Cardiac septum (tissue), 1 donor: ENCODE measurements at regions of chr3 and their contacts with region 1.

Region 1: DNA sequence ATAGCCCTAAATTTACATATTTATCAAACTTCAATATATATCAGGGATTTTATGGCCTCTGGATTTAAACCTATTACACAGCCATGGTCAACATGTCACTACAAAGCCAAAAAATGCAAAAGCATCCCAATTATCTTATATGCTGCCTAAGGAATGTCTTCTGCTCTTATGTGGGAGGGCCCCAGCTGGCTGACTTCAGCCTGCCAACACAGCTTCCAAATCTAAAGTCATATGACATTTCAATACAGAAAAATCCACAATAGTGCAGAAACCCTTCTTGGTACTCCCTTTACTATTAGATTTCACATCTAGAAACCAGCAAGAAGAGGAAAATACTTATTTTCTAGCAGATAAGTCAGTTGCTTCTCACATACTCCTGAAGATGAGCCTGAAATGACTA is 6.4 kb downstream of the PFN2 start:
- DNase-seq: no peak

Region 2: DNA sequence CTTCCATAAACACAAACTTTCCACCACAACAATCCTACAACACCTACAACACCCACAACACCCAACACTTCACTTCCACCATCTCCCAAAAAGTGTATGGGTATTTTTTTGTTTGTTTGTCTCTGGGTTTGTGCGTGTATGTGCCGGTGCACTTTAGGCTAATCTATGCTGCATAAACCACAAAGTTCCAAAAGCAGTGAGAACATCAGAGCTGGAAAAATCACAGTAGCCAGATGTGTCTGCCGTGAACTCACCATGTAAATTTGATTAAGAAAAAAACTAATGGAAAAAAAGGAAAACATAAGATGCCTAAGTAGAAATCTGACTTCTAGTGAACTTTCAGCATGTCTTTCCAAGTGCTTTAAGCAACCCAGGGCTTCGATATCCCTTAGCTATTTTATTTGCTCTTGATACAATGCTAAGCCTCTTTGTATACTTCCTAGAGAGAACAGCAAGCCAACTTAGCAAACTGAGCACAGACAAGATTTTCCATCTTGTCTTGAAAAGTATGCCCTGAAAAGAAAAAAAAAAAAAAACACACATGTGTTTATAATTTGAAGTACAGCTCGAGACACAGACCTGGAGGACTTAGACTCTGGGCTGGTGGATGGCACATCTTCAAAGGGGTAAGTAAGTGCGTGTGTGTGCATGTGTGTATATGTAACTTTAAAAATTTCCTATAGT is 397.9 kb before region 1 on chr3:
- intact Hi-C with region 1: no loop called
- DNase-seq: no peak

Region 3: DNA sequence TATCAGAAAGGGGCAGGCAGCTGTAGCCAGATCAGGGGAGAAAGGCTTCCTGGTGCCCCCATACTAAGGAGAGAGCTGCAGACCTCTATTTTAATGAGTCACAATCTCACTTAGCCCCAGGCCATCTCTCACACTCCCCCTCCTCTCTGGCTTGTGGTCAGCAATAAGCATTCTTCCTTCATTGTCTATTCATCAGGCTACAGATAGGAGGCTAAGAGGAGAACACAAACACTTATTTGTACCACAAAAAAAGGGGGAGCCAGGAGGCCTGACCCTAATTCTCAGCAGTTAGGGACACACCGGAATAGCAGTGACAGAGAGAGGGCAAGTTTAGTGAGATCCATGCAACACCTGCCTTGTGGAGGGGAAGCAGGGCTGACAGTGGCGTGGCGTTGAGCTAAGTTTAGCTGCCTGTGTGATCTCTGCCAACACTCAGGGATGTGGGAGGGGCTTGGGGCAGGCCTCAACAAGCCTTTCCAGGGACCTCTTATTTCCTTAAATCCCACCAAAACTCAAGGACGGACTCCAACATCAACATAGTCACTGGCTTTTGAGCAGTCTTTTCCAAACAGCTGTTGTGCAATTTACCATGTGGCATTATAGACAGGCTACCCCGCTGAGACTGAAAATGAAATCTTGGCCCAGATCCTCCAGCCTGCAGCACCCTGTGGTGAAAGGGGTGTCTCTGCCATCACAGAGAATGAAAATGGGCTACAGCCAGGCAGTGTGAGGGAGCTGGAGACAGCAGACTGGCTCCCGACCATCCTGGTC is 251.9 kb after region 1 on chr3:
- intact Hi-C with region 1: loop called (anchors 2 kb)
- DNase-seq: peak; percentile 84

Region 4: DNA sequence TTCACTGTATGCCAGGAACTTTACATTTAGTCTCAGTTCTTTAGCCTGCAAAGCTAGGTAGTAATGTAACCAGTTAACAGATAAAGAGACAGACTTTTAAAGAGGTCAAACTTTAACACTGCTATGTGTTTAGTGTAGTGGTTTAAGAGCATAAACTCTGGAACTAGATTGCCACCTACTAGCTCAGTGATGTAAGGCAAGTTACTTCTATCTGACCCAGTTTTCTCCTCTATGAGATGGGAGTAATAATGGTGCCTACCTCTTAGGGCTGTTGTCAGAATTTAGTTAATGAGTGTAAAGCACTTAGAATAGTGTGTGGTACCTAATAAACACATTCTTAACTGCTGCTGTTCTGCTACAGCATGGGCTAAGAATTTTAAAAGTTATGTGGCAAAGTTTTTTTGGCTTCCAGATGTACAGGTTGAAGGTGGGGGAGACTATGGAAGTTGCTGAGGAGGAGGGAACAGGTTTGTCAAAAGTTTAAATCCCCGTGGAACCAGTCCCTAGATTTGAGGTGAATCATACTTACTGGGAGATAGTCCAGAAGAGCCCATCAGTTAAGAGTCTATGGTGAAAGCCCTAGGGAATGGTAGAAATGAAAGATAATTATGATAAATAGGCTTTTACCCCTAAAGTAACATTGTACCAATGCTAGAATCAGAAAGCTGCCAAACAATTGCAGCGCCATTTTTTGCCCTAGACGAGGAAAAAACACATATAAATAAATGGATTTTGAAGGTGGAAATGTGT is 457.7 kb after region 1 on chr3:
- intact Hi-C with region 1: no loop called
- DNase-seq: no peak